ENCODE measurements at regions of chr12 and their contacts with region 1.

Region 1: GRCh38 chr12:12562585-12563261 is at the start of gene DUSP16:
- DNase-seq: peak; percentile 93
- H3K4me3 ChIP-seq: peak within 1 kb of the TSS; percentile 73 to 100
- H3K27ac ChIP-seq: peak within 1 kb of the TSS; percentile 99 to 100
- H3K4me1 ChIP-seq: peaks cover 3% of the 10 kb centered on the region
- H3K27me3 ChIP-seq: no peaks in the 10 kb centered on the region
- CTCF ChIP-seq: peak in 3 of 4 experiments; percentile 18 to 57 (median 46)
- POLR2A ChIP-seq: peak; percentile 78
- total RNA-seq, gene DUSP16: 60.8 to 87.0 TPM

Region 2: GRCh38 chr12:12376646-12377448 is 185.9 kb before region 1 on chr12:
- intact Hi-C with region 1: loop called (anchors 2 kb)
- DNase-seq: peak; percentile 43
- H3K4me3 ChIP-seq: no peak overlapping the region
- H3K27ac ChIP-seq: no peak overlapping the region
- H3K4me1 ChIP-seq: no peaks in the 10 kb centered on the region
- H3K27me3 ChIP-seq: no peaks in the 10 kb centered on the region
- CTCF ChIP-seq: peak; percentile 53 to 93 (median 90)
- POLR2A ChIP-seq: no peak

Region 3: DNA sequence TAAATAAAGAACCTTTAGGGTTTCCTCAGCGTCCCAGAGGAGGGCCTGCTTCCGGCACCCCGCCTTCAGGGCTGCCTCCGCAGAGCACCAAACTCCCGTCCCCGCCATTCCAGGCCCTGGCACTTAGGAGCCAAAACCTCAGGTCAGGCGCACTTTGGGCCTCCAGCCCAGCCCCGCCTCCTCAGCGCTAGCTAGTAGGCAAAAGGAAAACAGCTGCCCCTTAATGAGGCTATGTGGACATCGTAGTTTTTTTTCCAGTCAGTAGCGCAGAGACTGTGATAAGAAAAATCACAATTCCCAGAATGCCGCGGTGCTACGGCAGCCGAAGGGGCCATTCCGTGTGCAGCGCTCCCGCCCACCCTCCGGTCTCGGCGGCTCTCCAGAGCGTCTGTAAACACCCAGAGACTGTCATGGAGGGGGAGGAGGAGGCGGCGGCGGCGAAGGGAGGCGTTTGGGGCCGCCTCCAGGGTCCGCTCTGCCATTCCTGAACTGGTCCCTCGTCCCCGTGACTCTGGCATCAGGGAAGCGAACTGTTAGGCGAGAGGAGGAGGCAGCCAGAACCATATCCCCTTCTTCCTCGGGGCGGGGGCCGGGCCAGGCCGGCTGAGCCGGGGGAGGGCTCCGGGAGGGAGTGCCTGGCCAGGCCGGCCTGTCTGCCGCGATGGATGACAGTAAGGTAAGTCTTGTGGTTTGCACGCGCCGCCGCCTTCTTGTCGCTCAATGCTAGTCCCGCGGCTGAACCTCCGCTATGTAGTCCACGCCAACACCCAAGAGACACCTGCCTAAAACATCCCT is 49.0 kb after region 1 on chr12 and contains the start of gene CREBL2:
- intact Hi-C with region 1: loop called (anchors 5 kb)
- DNase-seq: peak; percentile 92
- H3K4me3 ChIP-seq: peak within 1 kb of the TSS; percentile 47 to 58
- H3K27ac ChIP-seq: peak within 1 kb of the TSS; percentile 90 to 94
- H3K4me1 ChIP-seq: no peaks in the 10 kb centered on the region
- H3K27me3 ChIP-seq: no peaks in the 10 kb centered on the region
- CTCF ChIP-seq: peak in 1 of 4 experiments; percentile 14
- POLR2A ChIP-seq: peak; percentile 55
- total RNA-seq, gene CREBL2: 48.1 to 59.8 TPM

Region 4: DNA sequence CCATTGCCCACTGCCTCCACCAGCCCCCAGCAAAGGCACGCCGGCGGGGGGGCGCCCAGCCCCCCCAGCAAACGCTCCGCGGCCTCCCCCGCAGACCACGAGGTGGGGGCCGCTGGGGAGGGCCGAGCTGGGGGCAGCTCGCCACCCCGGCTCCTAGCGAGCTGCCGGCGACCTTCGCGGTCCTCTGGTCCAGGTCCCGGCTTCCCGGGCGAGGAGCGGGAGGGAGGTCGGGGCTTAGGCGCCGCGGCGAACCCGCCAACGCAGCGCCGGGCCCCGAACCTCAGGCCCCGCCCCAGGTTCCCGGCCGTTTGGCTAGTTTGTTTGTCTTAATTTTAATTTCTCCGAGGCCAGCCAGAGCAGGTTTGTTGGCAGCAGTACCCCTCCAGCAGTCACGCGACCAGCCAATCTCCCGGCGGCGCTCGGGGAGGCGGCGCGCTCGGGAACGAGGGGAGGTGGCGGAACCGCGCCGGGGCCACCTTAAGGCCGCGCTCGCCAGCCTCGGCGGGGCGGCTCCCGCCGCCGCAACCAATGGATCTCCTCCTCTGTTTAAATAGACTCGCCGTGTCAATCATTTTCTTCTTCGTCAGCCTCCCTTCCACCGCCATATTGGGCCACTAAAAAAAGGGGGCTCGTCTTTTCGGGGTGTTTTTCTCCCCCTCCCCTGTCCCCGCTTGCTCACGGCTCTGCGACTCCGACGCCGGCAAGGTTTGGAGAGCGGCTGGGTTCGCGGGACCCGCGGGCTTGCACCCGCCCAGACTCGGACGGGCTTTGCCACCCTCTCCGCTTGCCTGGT is 154.3 kb after region 1 on chr12 and contains the start of gene CDKN1B:
- intact Hi-C with region 1: loop called (anchors 5 kb)
- DNase-seq: peak; percentile 95
- H3K4me3 ChIP-seq: peak within 1 kb of the TSS; percentile 92 to 94
- H3K27ac ChIP-seq: peak within 1 kb of the TSS; percentile 100
- H3K4me1 ChIP-seq: peaks cover 6% of the 10 kb centered on the region
- H3K27me3 ChIP-seq: no peaks in the 10 kb centered on the region
- CTCF ChIP-seq: no peak
- POLR2A ChIP-seq: peak; percentile 82
- total RNA-seq, gene CDKN1B: 73.5 to 110 TPM

Region 5: DNA sequence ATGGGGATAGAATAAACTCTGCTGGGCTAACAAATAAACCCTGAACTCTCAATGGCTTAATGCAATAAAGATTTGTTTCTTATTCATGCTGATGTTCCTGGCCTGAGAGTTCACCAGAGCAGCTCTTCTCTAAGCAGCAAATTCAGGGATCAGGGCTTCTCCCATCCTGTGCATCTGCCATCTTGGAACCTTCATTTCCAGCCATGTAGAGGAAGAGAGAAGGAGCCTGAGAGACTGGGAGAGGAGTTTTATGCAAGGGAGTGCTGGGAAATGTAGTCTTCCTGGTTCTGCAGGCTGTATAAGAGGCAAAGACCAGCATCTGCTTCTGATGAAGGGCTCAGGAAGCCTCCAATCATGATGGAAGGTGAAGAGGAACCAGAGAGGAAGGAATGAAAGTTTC is 202.1 kb after region 1 on chr12:
- intact Hi-C with region 1: no loop called
- DNase-seq: no peak
- H3K4me3 ChIP-seq: no peak overlapping the region
- H3K27ac ChIP-seq: no peak overlapping the region
- H3K4me1 ChIP-seq: no peaks in the 10 kb centered on the region
- H3K27me3 ChIP-seq: no peaks in the 10 kb centered on the region
- CTCF ChIP-seq: no peak
- POLR2A ChIP-seq: no peak

Measured in prostate gland (tissue), 2 donors.